GM12878 (cell line): ENCODE measurements at regions of chr17 and their contacts with region 1.

Region 1: GRCh38 chr17:44919885-44920564 is 4.7 kb upstream of the GFAP start:
- DNase-seq: peak; percentile 54
- ATAC-seq: peak; percentile 97
- H3K4me3 ChIP-seq: no peak overlapping the region
- H3K27ac ChIP-seq: no peak overlapping the region
- H3K4me1 ChIP-seq: peaks cover 12% of the 10 kb centered on the region
- H3K27me3 ChIP-seq: peaks cover 0 to 3% of the 10 kb centered on the region in 2 experiments; a peak in 1 of 4 replicates
- CTCF ChIP-seq: peak; percentile 83 to 98 (median 88); a peak in 5 of 6 replicates
- EP300 ChIP-seq: no peak
- POLR2A ChIP-seq: no peak
- RAD21 ChIP-seq: peak; percentile 86

Region 2: GRCh38 chr17:44832805-44833204 is 87.2 kb before region 1 on chr17:
- CTCF ChIA-PET with region 1: no interaction called
- POLR2A ChIA-PET with region 1: no interaction called
- RAD21 ChIA-PET with region 1: no interaction called
- SMC1A ChIA-PET with region 1: no interaction called
- in situ Hi-C with region 1: no loop called
- intact Hi-C with region 1: no loop called
- DNase-seq: no peak
- ATAC-seq: no peak
- H3K4me3 ChIP-seq: no peak overlapping the region
- H3K27ac ChIP-seq: no peak overlapping the region
- H3K4me1 ChIP-seq: no peaks in the 10 kb centered on the region
- H3K27me3 ChIP-seq: peaks cover 0 to 7% of the 10 kb centered on the region in 2 experiments; a peak in 3 of 4 replicates
- CTCF ChIP-seq: no peak
- EP300 ChIP-seq: no peak
- POLR2A ChIP-seq: no peak
- RAD21 ChIP-seq: no peak

Region 3: DNA sequence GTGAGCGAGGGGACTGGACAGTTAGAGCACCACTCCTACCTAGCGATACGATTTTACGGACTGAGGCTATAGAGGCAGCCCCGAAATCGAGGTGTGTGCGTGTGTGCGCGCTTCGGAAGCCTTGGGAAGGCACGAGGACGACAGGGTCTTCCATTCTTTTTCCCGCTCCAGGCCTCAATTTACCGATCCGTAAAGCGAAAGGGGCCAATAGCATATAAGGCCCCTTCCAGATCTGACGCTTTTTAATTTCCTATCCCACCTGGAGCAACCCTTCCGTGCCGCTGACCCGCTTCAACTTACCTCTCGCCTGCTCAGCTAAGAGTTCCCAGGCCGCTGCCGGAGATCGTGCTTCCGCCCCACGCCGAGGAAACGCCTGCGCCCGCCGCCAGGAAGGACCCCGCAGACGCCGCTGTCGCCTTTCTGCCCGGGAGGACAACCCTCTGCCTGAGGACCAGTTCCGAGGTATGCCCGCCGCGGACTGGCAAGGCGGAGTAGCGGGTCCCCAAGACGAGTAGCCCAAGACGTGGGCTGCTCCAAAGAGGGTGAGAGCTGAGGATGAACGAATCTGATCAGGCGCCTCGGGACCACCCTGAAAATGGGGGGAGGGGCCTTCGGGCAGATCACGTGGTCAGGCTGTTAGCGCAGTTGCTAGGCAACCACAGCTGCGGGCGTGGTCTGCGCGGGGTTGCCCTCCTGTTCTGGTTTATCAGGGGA is 20.8 kb before region 1 on chr17 and contains the start of gene EFTUD2:
- CTCF ChIA-PET with region 1: interaction called, 18 read pairs
- POLR2A ChIA-PET with region 1: interaction called, 4 read pairs
- RAD21 ChIA-PET with region 1: interaction called, 6 read pairs
- SMC1A ChIA-PET with region 1: interaction called, 7 read pairs
- in situ Hi-C with region 1: no loop called
- intact Hi-C with region 1: no loop called
- DNase-seq: peak; percentile 71
- ATAC-seq: peak; percentile 91
- H3K4me3 ChIP-seq: peak within 1 kb of the TSS; percentile 87
- H3K27ac ChIP-seq: peak within 1 kb of the TSS; percentile 97
- H3K4me1 ChIP-seq: peaks cover 3% of the 10 kb centered on the region; the same call in 1 of the 2 replicates
- H3K27me3 ChIP-seq: no peaks in the 10 kb centered on the region
- CTCF ChIP-seq: no peak
- EP300 ChIP-seq: peak in 1 of 2 experiments; percentile 20; a peak in 1 of 4 replicates
- POLR2A ChIP-seq: peak; percentile 96
- RAD21 ChIP-seq: no peak
- polyA plus RNA-seq, gene EFTUD2: 33.0 to 39.4 TPM

Region 4: DNA sequence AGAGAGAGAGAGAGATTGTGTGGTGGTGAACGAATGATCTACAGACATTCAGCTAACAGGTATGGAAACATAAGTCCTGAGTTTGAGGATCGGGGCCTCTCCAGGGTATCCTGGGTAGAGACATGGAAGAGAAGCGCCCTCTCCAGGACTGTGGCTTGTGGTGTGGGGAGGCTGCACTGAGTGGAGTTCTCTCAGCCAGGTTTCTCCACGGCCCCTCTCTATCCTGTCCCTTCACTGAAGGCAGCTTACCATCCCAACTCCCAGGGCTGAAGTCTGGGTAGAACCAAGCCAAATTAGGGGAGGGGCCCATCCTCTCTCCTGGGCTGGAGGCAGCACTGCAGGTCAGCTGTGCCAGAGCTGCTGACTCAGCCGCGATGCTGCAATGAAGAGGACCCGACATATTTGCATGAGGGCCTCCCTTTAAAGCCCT is 41.9 kb after region 1 on chr17:
- CTCF ChIA-PET with region 1: interaction called, 29 read pairs
- POLR2A ChIA-PET with region 1: no interaction called
- RAD21 ChIA-PET with region 1: interaction called, 4 read pairs
- SMC1A ChIA-PET with region 1: interaction called, 3 read pairs
- in situ Hi-C with region 1: no loop called
- intact Hi-C with region 1: no loop called
- DNase-seq: no peak
- ATAC-seq: no peak
- H3K4me3 ChIP-seq: no peak overlapping the region
- H3K27ac ChIP-seq: no peak overlapping the region
- H3K4me1 ChIP-seq: no peaks in the 10 kb centered on the region
- H3K27me3 ChIP-seq: peaks cover 13 to 14% of the 10 kb centered on the region in 2 experiments
- CTCF ChIP-seq: no peak
- EP300 ChIP-seq: no peak
- POLR2A ChIP-seq: no peak
- RAD21 ChIP-seq: no peak

Region 5: GRCh38 chr17:45021607-45022287 is 101.7 kb after region 1 on chr17:
- CTCF ChIA-PET with region 1: interaction called, 156 read pairs
- POLR2A ChIA-PET with region 1: interaction called, 13 read pairs
- RAD21 ChIA-PET with region 1: interaction called, 82 read pairs
- SMC1A ChIA-PET with region 1: interaction called, 90 read pairs
- in situ Hi-C with region 1: loop called (anchors 10 kb)
- intact Hi-C with region 1: loop called (anchors 1 kb)
- DNase-seq: no peak
- ATAC-seq: peak; percentile 86
- H3K4me3 ChIP-seq: no peak overlapping the region
- H3K27ac ChIP-seq: no peak overlapping the region
- H3K4me1 ChIP-seq: peaks cover 29% of the 10 kb centered on the region
- H3K27me3 ChIP-seq: peaks cover 0 to 6% of the 10 kb centered on the region in 2 experiments; a peak in 2 of 4 replicates
- CTCF ChIP-seq: peak; percentile 62 to 89 (median 74); a peak in 5 of 6 replicates
- EP300 ChIP-seq: no peak
- POLR2A ChIP-seq: peak; percentile 44; the same call in 1 of the 2 replicates
- RAD21 ChIP-seq: peak; percentile 74

Region 6: DNA sequence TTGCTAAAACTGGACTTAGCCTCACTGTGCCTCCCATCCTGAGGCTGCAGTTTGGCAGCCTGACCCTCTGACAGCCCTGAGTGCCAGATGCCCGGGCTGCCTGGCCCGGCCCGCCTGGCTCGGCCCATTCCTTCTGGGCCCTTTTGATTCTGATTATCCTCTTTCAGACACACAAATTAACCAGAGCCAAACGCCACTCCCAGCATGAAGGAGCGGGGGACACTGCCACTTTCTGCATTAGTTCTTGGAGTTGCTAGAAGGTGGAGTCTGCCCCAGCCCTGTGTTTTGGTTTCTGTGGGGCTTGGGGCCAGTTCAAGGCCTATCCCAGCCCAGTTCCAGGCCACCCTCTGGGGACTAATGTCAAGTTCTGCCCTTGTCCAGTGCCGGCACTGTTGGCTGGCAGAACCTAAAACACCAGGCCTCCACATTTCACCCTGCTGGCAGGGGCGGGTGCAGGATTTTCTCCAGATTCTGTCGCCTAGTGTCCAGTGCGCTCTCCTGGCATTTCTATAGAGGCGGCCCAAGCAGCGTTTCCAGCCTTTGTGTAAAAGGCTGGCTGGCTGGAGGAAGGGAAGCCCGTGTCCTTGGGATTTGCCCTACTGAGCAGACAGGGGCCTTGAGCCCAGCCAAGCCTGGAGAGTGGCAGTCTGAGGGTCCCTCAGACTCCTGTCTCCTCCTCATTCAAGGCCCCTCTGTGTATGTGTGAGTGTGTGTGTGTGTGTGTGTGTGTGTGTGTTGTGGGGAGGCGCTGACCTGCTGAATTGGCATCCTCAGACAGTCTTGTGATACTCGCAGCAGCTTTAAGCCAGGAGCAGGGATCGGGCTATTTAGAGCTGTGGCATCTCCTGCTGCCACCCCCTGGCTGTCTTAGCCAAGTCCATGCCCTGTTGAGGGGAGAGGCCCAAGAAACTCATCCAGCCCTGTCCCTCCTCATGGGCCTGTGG is 190.9 kb after region 1 on chr17:
- CTCF ChIA-PET with region 1: no interaction called
- POLR2A ChIA-PET with region 1: no interaction called
- RAD21 ChIA-PET with region 1: interaction called, 7 read pairs
- SMC1A ChIA-PET with region 1: interaction called, 4 read pairs
- in situ Hi-C with region 1: loop called (anchors 10 kb)
- intact Hi-C with region 1: loop called (anchors 5 kb)
- DNase-seq: no peak
- ATAC-seq: peak; percentile 24; the same call in 2 of the 3 replicates
- H3K4me3 ChIP-seq: no peak overlapping the region
- H3K27ac ChIP-seq: no peak overlapping the region
- H3K4me1 ChIP-seq: peaks cover 11% of the 10 kb centered on the region; the same call in 1 of the 2 replicates
- H3K27me3 ChIP-seq: no peaks in the 10 kb centered on the region
- CTCF ChIP-seq: no peak
- EP300 ChIP-seq: no peak
- POLR2A ChIP-seq: no peak
- RAD21 ChIP-seq: no peak

Region 7: GRCh38 chr17:45143104-45143670 is 223.2 kb after region 1 on chr17:
- CTCF ChIA-PET with region 1: no interaction called
- POLR2A ChIA-PET with region 1: no interaction called
- RAD21 ChIA-PET with region 1: no interaction called
- SMC1A ChIA-PET with region 1: no interaction called
- in situ Hi-C with region 1: no loop called
- intact Hi-C with region 1: no loop called
- DNase-seq: no peak
- ATAC-seq: no peak
- H3K4me3 ChIP-seq: no peak overlapping the region
- H3K27ac ChIP-seq: no peak overlapping the region
- H3K4me1 ChIP-seq: peaks cover 18% of the 10 kb centered on the region
- H3K27me3 ChIP-seq: no peaks in the 10 kb centered on the region
- CTCF ChIP-seq: no peak
- EP300 ChIP-seq: no peak
- POLR2A ChIP-seq: no peak
- RAD21 ChIP-seq: no peak

Region 8: GRCh38 chr17:45184144-45184543 is 264.1 kb after region 1 on chr17:
- CTCF ChIA-PET with region 1: no interaction called
- POLR2A ChIA-PET with region 1: no interaction called
- RAD21 ChIA-PET with region 1: no interaction called
- SMC1A ChIA-PET with region 1: no interaction called
- in situ Hi-C with region 1: no loop called
- intact Hi-C with region 1: no loop called
- DNase-seq: no peak
- ATAC-seq: no peak
- H3K4me3 ChIP-seq: no peak overlapping the region
- H3K27ac ChIP-seq: no peak overlapping the region
- H3K4me1 ChIP-seq: no peaks in the 10 kb centered on the region
- H3K27me3 ChIP-seq: no peaks in the 10 kb centered on the region
- CTCF ChIP-seq: no peak
- EP300 ChIP-seq: no peak
- POLR2A ChIP-seq: no peak
- RAD21 ChIP-seq: no peak